Panc1 (cell line): ENCODE measurements at regions of chr2 and their contacts with region 1.

Region 1: DNA sequence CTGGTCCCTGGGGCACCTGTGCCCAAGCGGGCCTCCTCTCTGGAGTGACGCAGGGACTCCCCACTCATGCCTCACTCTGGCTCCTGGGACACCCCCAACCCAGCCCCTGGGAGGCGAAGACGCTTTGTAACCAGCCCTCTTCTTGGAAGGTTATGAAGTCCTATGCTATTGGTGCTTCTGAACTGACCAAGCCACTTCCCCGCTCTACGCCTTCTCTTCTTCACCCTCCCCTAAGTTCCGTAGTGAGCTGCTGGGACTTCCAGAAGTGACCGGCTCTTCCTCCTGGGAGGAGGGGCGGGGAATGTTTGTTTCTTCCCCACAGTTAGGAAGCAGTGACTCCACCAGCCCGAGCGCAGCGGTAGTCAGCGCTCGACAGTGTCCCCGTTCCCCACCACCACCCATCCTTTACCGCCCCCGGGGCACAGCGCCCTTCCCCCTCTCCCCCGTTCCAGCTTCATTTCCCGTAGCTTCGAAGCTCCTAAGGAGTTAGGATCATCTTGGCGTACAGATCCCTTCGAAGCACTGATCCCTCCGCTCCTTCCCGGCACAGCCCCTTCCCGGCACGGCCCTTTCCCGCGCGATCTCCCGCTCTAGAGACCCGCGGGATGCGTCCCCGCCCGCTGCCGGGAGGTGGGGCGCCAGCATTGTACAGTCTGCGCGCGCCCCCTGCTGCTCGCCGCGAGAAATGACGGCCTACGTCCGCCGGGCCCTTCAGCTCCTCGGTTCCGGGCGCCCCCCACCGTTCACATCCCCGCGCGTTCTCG is 25.3 kb upstream of the NOTO start:
- DNase-seq: peak; percentile 33
- ATAC-seq: peak; percentile 92
- H3K4me3 ChIP-seq: peak overlapping the region; percentile 61 to 84
- H3K27ac ChIP-seq: peak overlapping the region; percentile 70
- H3K4me1 ChIP-seq: peaks cover 11% of the 10 kb centered on the region
- H3K27me3 ChIP-seq: peaks cover 14% of the 10 kb centered on the region
- CTCF ChIP-seq: peak; percentile 99

Region 2: GRCh38 chr2:72803151-72803550 is 373.9 kb before region 1 on chr2:
- CTCF ChIA-PET with region 1: no interaction called
- POLR2A ChIA-PET with region 1: no interaction called
- in situ Hi-C with region 1: no loop called
- intact Hi-C with region 1: no loop called
- DNase-seq: no peak
- ATAC-seq: no peak
- H3K4me3 ChIP-seq: no peak overlapping the region
- H3K27ac ChIP-seq: no peak overlapping the region
- H3K4me1 ChIP-seq: peaks cover 2% of the 10 kb centered on the region; the same call in 1 of the 2 replicates
- H3K27me3 ChIP-seq: no peaks in the 10 kb centered on the region
- CTCF ChIP-seq: no peak

Region 3: DNA sequence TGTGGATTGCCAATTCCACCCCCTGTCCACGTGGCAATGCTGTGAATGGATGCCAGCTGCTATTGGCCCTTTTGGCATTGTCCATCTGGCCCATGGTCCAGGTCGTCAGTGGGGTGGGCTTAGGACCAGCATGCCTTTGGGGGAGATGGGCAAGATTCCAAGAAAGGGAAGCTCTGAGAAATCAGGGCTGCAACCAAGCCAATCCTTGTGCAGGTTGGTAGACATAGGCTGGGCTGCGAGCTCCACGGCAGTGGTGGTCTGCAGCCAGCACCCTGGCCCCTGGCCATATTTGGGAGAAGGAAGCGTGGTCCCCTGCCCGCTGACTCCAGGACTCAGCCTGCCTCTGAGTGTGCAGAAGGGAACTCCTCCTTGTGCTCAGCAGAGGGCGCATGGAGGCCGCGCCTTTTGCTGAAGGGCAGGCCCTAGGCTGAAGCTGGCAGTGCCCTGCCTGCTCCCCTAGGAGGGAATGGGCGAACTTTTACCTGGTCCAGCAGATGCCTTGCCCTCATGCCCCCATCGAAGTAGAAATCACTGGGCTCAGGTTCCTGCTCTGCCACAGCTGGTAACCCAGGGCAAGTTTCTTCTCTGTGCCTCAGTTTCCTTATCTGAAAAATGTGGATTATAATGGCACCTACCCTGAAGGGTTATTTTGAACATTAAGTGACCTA is 284.4 kb before region 1 on chr2:
- CTCF ChIA-PET with region 1: interaction called, 27 read pairs
- POLR2A ChIA-PET with region 1: no interaction called
- in situ Hi-C with region 1: no loop called
- intact Hi-C with region 1: loop called (anchors 5 kb)
- DNase-seq: no peak
- ATAC-seq: peak; percentile 90
- H3K4me3 ChIP-seq: no peak overlapping the region
- H3K27ac ChIP-seq: no peak overlapping the region
- H3K4me1 ChIP-seq: peaks cover 12% of the 10 kb centered on the region
- H3K27me3 ChIP-seq: no peaks in the 10 kb centered on the region
- CTCF ChIP-seq: peak; percentile 91

Region 4: DNA sequence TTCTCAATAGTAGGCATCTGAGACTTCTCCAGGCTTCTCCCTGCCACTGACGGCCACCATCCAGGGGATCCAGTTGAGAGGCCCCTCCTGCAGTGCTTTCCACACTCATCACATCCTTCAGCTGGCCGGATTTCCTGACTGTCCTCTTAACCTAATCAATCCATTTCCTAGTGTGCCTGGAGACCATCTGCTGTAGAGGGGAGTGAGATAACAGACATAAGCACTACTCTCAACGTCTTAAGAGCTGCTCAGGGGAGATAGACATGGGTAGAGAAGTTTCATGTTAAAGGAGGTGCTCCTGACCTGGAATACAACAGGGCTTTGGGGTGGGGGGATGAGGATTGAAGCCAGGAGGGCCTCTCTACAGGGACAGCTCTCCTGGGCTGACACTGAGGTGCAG is 275.6 kb before region 1 on chr2:
- CTCF ChIA-PET with region 1: interaction called, 10 read pairs
- POLR2A ChIA-PET with region 1: interaction called, 3 read pairs
- in situ Hi-C with region 1: no loop called
- intact Hi-C with region 1: no loop called
- DNase-seq: no peak
- ATAC-seq: no peak
- H3K4me3 ChIP-seq: no peak overlapping the region
- H3K27ac ChIP-seq: no peak overlapping the region
- H3K4me1 ChIP-seq: no peaks in the 10 kb centered on the region
- H3K27me3 ChIP-seq: peaks cover 30% of the 10 kb centered on the region
- CTCF ChIP-seq: no peak

Region 5: DNA sequence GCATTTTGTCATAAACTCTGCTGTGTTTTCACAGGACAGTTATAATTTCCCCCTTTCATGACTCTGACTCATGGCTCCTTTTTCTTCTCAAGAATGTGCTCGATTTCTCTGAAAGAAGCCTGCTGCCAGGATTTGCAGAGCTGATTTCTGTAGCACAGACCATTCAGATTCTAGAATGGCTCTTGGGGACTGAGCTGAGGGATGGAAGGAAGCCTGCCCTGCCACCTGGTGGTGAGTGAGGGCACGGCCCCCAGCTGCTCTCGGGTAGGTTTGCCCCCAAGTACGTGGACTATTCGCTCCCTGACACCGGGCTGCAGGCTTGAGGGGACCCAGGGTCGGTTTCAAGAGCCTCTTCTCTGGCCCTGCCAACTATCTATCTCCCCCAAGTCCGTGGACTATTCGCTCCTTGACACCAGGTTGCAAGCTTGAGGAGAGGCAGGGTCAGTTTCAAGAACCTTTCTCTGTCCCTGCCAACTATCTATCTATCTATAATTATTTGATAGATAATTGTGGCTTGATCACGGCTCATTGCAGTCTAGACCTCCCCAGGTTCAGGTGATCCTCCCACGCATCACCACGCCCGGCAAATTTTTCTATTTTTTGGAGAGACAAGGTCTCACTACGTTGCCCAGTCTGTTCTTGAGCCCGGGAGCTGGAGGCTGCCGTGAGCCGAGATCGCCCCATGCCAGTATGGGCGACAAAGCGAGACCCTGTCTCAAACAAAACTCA is 35.5 kb after region 1 on chr2:
- CTCF ChIA-PET with region 1: interaction called, 36 read pairs
- POLR2A ChIA-PET with region 1: interaction called, 3 read pairs
- in situ Hi-C with region 1: no loop called
- intact Hi-C with region 1: no loop called
- DNase-seq: peak; percentile 58
- ATAC-seq: peak; percentile 87
- H3K4me3 ChIP-seq: peak overlapping the region; percentile 68 to 90
- H3K27ac ChIP-seq: no peak overlapping the region
- H3K4me1 ChIP-seq: peaks cover 6% of the 10 kb centered on the region; the same call in 1 of the 2 replicates
- H3K27me3 ChIP-seq: no peaks in the 10 kb centered on the region
- CTCF ChIP-seq: peak; percentile 98

Region 6: GRCh38 chr2:73269686-73270465 is 92.8 kb after region 1 on chr2:
- CTCF ChIA-PET with region 1: interaction called, 11 read pairs
- POLR2A ChIA-PET with region 1: no interaction called
- in situ Hi-C with region 1: no loop called
- intact Hi-C with region 1: no loop called
- DNase-seq: no peak
- ATAC-seq: no peak
- H3K4me3 ChIP-seq: peak overlapping the region; percentile 43 to 52
- H3K27ac ChIP-seq: no peak overlapping the region; the same call in 1 of the 2 replicates
- H3K4me1 ChIP-seq: peaks cover 4% of the 10 kb centered on the region; the same call in 1 of the 2 replicates
- H3K27me3 ChIP-seq: no peaks in the 10 kb centered on the region
- CTCF ChIP-seq: no peak